AG04449 (cell line): ENCODE measurements at regions of chr3 and their contacts with region 1.

Region 1: DNA sequence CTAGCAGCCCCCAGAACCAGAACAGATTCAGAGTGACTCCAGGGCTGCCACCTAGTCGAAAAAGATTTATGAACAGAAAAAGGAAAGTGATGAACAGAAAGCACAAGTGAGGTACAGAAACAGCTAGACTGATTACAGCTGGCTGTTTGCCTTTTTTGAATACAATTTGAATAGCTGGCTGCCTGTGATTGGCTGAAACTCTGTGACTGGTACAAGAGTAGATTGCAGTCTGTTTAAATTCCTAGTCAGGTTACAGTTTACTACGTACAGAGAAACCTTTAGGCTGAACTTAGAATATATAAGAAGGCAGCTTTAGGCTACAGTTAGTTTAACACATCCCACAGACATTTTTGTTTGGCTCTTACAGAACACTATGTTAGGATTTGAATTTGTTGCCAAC is 10.0 kb downstream of the CCDC13 start:
- DNase-seq: no peak
- H3K4me3 ChIP-seq: no peak overlapping the region
- CTCF ChIP-seq: no peak

Region 2: DNA sequence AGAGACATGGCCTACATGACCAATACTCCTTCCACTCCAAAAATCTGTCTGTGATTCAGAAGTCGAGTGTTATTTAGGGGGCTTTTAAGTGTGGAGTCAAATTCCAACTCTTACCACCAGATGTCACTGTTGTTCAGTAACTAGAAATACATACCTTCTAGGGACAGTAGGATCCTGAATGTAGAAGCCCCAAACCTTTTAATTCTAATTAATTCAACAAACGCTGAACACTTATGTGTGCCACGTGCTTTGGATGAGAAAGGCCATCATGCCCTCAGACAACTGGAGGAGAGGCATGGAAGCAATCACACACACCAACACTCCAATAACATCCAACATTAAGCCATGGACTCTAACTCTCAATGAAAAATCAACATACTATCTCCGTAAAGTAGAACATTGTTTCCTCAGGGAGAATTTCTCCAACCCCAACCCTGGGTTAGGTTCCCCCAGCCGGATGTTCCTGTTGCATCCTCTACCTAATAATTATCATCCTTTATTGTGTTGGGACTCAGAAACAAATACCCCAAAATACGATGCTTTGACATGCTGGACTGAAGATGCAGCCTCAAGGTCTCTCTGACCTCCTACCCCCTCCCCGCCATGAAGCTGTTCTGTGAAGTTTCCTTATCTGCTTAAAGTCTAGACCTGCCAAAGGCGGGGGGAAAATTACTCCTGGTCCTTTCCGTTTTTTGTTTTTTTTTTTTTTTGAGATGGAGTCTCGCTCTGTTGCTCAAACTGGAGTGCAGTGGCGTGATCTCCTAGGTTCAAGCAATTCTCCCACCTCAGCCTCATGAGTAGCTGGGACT is 18.1 kb after region 1 on chr3:
- CTCF ChIA-PET with region 1: interaction called, 15 read pairs
- POLR2A ChIA-PET with region 1: no interaction called
- DNase-seq: no peak
- H3K4me3 ChIP-seq: no peak overlapping the region
- CTCF ChIP-seq: peak; percentile 45